Mammary epithelial cell (primary cell): ENCODE measurements at regions of chr5 and their contacts with region 1.

Region 1: DNA sequence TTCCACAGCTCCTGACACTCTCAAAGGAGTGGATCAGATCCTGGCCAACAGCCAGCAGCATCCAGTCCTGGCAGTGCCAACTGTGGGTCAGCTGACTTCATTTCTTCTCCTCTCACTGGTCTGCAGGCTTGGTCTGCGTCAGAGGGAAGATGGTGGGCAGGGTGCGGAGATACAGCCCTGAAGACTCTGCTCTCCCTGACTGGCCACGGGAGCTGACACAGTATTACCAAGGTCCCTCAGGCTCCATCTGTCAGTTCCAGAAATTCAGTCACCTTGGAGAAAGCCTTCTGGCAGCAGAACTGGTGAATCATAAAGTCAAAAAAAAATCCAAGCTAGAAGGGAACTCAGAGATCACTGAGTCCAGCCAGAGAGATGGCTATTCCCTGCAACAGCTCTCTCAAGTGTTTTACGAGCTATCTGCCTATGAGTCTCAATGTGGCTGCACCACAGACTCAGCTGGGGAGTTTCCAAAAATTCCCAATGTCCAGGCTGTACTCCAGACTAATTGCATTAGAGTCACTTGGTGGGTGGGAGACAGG is 28.0 kb downstream of the C1QTNF2 start:
- DNase-seq: peak; percentile 83
- H3K4me3 ChIP-seq: no peak overlapping the region
- H3K27ac ChIP-seq: no peak overlapping the region
- H3K4me1 ChIP-seq: peaks cover 11% of the 10 kb centered on the region
- H3K27me3 ChIP-seq: no peaks in the 10 kb centered on the region
- CTCF ChIP-seq: no peak

Region 2: GRCh38 chr5:160008877-160009590 is 333.4 kb before region 1 on chr5 and contains the start of gene TTC1:
- CTCF ChIA-PET with region 1: no interaction called
- dilution Hi-C with region 1: no loop called
- in situ Hi-C with region 1: loop called in 1 of 2 experiments (anchors 25 kb)
- intact Hi-C with region 1: no loop called
- DNase-seq: peak; percentile 99
- H3K4me3 ChIP-seq: peak within 1 kb of the TSS; percentile 85 to 100 (median 99)
- H3K27ac ChIP-seq: peak within 1 kb of the TSS; percentile 99
- H3K4me1 ChIP-seq: peaks cover 18% of the 10 kb centered on the region
- H3K27me3 ChIP-seq: no peaks in the 10 kb centered on the region
- CTCF ChIP-seq: no peak
- total RNA-seq, gene TTC1: 41.8 to 46.8 TPM

Region 3: DNA sequence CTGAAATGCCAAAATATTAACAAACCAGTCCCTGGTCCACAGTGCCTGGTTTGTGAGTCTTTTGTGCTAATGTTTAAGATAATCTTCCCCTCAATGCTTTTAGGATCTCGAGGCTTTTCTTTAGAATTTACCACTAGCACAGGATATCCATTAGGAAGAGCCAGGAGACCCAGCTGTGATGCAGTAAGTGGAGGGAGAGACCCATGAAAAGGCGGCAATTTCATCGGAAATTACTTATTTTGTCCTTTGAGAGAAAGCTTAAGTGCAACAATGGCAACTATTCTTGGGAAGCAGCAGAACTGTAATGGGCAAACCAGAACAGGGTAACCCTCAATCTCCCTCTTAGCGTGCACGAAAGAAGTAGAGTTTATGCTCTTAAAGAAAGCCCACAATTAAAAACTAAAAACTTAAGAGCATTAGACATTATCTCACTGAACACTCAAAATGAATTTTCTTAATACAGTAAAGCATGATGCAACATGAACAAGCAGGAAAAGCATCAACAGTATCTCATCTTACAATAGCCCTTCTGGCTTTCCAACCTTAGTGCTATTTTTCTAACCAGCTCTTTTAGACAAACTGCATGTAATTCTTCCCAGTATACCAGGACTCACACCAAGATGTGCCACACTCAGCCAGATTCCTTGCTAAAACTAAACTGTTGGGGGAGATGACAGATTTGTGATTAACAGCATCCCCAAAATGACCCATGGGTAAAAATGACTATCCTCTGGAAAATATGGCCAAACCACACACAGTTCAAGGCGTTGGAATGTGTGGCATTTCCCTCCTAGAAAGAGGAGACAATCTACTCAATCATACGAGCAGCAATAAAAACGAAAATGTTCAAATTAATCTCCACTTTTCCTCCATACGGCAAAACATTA is 259.6 kb before region 1 on chr5:
- CTCF ChIA-PET with region 1: no interaction called
- dilution Hi-C with region 1: no loop called
- in situ Hi-C with region 1: no loop called
- intact Hi-C with region 1: loop called (anchors 2 kb)
- DNase-seq: peak; percentile 56
- H3K4me3 ChIP-seq: no peak overlapping the region
- H3K27ac ChIP-seq: no peak overlapping the region
- H3K4me1 ChIP-seq: peaks cover 22% of the 10 kb centered on the region
- H3K27me3 ChIP-seq: no peaks in the 10 kb centered on the region
- CTCF ChIP-seq: no peak

Region 4: GRCh38 chr5:160199410-160199911 is 143.0 kb before region 1 on chr5:
- CTCF ChIA-PET with region 1: interaction called, 3 read pairs
- dilution Hi-C with region 1: no loop called
- in situ Hi-C with region 1: loop called (anchors 5 to 10 kb)
- intact Hi-C with region 1: loop called (anchors 1 kb)
- DNase-seq: peak; percentile 39
- H3K4me3 ChIP-seq: peak overlapping the region in 2 of 3 experiments; percentile 12 to 38
- H3K27ac ChIP-seq: no peak overlapping the region
- H3K4me1 ChIP-seq: no peaks in the 10 kb centered on the region
- H3K27me3 ChIP-seq: no peaks in the 10 kb centered on the region
- CTCF ChIP-seq: peak; percentile 60 to 75

Region 5: DNA sequence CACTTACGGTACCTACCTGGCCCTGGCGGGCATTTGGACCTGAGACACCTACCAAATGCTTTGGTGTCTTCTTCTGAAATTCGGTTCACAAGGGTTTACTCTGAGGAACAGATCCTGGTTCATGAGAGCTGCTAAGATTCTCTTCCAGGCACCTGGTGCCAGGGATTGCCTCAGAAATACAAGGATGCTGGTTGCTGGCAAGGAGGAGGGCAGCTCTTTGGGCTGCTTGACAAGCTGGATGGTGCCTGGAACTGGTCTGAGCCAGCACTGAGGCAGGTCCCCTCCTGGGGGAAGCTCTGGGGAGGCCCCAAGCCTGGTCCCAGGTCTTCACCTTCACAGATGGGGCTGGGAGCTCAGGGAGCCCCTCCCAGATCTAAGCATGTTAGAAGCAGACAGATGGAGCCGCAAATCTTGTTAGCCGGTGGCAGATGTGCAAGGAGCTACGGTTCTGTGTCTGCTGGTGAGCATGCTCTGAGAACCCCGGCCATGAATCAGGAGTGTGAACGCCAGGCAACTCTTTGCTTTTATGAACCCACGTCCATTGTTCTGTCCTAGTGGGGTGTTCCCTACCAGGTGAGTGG is 96.9 kb before region 1 on chr5:
- CTCF ChIA-PET with region 1: interaction called, 4 read pairs
- dilution Hi-C with region 1: no loop called
- in situ Hi-C with region 1: loop called (anchors 10 kb)
- intact Hi-C with region 1: loop called (anchors 1 kb)
- DNase-seq: no peak
- H3K4me3 ChIP-seq: no peak overlapping the region
- H3K27ac ChIP-seq: no peak overlapping the region
- H3K4me1 ChIP-seq: no peaks in the 10 kb centered on the region
- H3K27me3 ChIP-seq: no peaks in the 10 kb centered on the region
- CTCF ChIP-seq: no peak

Region 6: GRCh38 chr5:160298189-160298588 is 44.3 kb before region 1 on chr5:
- CTCF ChIA-PET with region 1: no interaction called
- dilution Hi-C with region 1: no loop called
- in situ Hi-C with region 1: no loop called
- intact Hi-C with region 1: no loop called
- DNase-seq: no peak
- H3K4me3 ChIP-seq: no peak overlapping the region
- H3K27ac ChIP-seq: no peak overlapping the region
- H3K4me1 ChIP-seq: peaks cover 19% of the 10 kb centered on the region
- H3K27me3 ChIP-seq: no peaks in the 10 kb centered on the region
- CTCF ChIP-seq: no peak

Region 7: GRCh38 chr5:160312134-160312959 is 30.1 kb before region 1 on chr5 and contains the start of gene CCNJL:
- CTCF ChIA-PET with region 1: no interaction called
- dilution Hi-C with region 1: no loop called
- in situ Hi-C with region 1: no loop called
- intact Hi-C with region 1: loop called (anchors 1 kb)
- DNase-seq: peak; percentile 64
- H3K4me3 ChIP-seq: peak within 1 kb of the TSS; percentile 71 to 87 (median 85)
- H3K27ac ChIP-seq: peak within 1 kb of the TSS; percentile 6
- H3K4me1 ChIP-seq: peaks cover 22% of the 10 kb centered on the region
- H3K27me3 ChIP-seq: no peaks in the 10 kb centered on the region
- CTCF ChIP-seq: no peak
- total RNA-seq, gene CCNJL: 13.7 to 17.0 TPM

Region 8: DNA sequence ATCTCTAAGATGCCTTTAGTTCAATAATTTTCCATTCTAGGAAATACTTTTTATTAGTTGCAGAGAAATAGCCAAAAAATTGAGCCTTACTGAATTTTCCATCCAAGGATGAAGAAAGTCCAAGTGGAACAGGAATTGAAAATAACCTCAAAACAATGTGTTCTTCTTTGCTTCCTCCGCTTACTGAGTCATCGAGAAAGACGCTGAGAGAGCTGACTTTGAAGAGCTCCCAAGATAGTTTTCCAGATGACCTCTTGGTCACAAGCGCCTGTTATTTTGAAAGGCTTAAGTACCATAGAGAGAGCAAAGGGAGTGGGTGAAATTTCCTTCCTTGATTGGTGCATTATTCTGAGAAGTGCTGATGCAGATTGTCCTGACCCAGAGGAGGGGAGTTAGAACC is 763.1 kb after region 1 on chr5:
- CTCF ChIA-PET with region 1: no interaction called
- dilution Hi-C with region 1: no loop called
- in situ Hi-C with region 1: no loop called
- intact Hi-C with region 1: no loop called
- DNase-seq: no peak
- H3K4me3 ChIP-seq: no peak overlapping the region
- H3K27ac ChIP-seq: no peak overlapping the region
- H3K4me1 ChIP-seq: no peaks in the 10 kb centered on the region
- H3K27me3 ChIP-seq: no peaks in the 10 kb centered on the region
- CTCF ChIP-seq: no peak